Ovary (tissue), 10 donors: ENCODE measurements at regions of chr2 and their contacts with region 1.

Region 1: GRCh38 chr2:21037671-21038108 is 6.2 kb downstream of the APOB start:
- DNase-seq: no peak
- H3K4me3 ChIP-seq: no peak overlapping the region
- H3K27ac ChIP-seq: no peak overlapping the region
- H3K4me1 ChIP-seq: peaks cover 2% of the 10 kb centered on the region
- H3K27me3 ChIP-seq: no peaks in the 10 kb centered on the region
- CTCF ChIP-seq: no peak
- EP300 ChIP-seq: no peak
- POLR2A ChIP-seq: no peak

Region 2: DNA sequence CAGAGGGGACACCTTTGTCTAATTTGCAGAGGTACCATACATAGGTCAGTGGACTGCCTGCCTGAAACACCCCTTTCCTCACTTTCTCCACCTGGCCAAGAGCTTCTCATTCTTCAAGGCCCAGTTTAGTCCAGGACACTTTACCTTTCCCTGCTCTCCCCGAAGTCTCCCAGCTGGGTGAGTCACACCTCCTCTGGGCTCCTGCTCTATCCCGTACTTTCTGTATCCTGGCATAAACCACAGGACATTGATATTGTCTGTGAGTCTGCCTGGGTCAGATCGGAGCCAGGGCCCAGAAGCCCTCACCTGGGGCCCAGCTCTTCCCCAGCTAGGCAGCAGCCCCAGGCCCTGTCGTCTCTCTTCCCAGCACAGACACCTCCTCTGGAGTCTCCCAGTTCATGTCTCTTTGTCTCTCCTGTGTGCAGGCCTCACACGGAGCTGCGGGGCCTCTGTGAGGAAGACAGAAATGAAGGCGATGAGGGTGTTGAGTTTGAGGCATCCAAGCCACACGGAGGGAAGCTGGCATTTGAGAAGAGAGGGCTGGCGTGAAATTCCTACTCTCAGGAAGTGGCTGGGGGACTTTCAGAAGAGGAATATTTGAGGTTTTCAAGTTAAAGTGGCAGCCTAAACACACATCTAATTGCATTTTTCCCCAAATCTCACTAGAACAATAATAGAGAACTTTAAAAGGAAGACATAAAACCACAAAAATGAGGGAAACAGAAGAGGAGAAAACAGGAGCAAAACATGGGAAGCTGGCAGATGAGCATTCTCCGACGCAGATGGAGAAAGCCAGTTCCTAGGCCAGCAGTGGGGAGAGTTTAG is 906.7 kb before region 1 on chr2:
- intact Hi-C with region 1: no loop called
- DNase-seq: no peak
- H3K4me3 ChIP-seq: no peak overlapping the region
- H3K27ac ChIP-seq: no peak overlapping the region
- H3K4me1 ChIP-seq: no peaks in the 10 kb centered on the region
- H3K27me3 ChIP-seq: no peaks in the 10 kb centered on the region
- CTCF ChIP-seq: no peak
- EP300 ChIP-seq: no peak
- POLR2A ChIP-seq: no peak

Region 3: GRCh38 chr2:21095178-21095577 is 57.5 kb after region 1 on chr2:
- intact Hi-C with region 1: no loop called
- DNase-seq: no peak
- H3K4me3 ChIP-seq: no peak overlapping the region
- H3K27ac ChIP-seq: no peak overlapping the region
- H3K4me1 ChIP-seq: no peaks in the 10 kb centered on the region
- H3K27me3 ChIP-seq: no peaks in the 10 kb centered on the region
- CTCF ChIP-seq: no peak
- EP300 ChIP-seq: no peak
- POLR2A ChIP-seq: no peak

Region 4: GRCh38 chr2:21118302-21118920 is 80.7 kb after region 1 on chr2:
- intact Hi-C with region 1: loop called in 1 of 4 experiments (anchors 2 kb)
- DNase-seq: no peak
- H3K4me3 ChIP-seq: no peak overlapping the region
- H3K27ac ChIP-seq: no peak overlapping the region
- H3K4me1 ChIP-seq: no peaks in the 10 kb centered on the region
- H3K27me3 ChIP-seq: no peaks in the 10 kb centered on the region
- CTCF ChIP-seq: peak in 1 of 3 donors; percentile 17
- EP300 ChIP-seq: no peak
- POLR2A ChIP-seq: no peak